Left cardiac atrium (tissue), 4 donors: ENCODE measurements at regions of chr1 and their contacts with region 1.

Region 1: DNA sequence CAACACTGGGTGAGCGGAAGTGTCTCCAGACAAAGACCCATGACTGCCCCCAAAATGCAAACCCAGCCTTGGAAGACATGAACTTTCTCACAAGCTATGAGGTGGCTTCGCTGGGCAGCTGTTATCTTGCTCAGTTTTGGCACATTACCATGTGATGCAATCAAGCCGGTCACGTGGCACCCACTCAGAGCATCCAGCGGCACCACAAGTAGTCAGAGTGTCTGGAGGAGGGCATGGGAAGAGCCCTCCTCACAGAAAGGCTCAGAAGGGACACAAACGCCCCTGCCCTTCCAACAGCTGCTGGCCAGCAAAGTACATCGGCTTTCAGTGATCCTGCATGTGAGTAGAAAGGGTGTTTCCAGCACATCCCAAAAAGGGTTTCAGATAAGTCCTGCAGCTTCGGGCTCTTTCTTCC is 145.5 kb upstream of the IRF2BP2 start:
- DNase-seq: peak; percentile 81
- ATAC-seq: peak; percentile 87 to 94

Region 2: DNA sequence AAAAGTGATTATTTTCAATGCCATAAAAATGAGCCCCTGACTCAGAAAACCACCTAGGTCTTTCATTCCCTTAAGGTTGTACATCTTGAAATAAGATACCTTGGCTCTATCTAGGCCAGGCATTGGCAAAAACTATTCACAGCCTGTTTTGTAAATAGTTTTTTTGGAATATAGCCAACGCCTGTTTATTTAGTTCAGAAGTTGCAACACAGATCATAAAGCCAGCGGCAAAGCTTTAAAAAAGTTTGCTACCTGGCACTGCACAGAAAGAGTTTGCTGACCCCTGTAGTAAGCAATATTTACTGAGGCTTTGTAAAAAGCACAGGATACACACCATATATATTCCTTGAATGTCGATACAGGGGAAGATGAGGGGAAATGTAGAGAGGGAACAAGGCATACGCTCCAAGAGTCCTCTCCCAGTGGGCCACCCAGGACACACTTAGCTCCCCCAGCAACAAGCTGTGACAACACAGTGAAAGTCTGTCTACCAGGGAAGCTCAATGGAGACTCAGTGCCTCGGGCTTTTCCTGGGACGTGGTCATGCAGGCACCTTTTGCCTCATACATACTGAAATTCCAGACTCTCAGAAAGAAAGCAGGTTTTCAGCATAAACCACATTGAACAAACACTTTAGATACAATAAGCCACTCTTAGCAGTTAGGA is 297.0 kb before region 1 on chr1:
- intact Hi-C with region 1: no loop called
- DNase-seq: no peak
- ATAC-seq: no peak

Region 3: GRCh38 chr1:234856845-234857245 is 101.4 kb after region 1 on chr1:
- intact Hi-C with region 1: loop called in 1 of 2 experiments (anchors 5 kb)
- DNase-seq: peak; percentile 70
- ATAC-seq: peak; percentile 76 to 85

Region 4: DNA sequence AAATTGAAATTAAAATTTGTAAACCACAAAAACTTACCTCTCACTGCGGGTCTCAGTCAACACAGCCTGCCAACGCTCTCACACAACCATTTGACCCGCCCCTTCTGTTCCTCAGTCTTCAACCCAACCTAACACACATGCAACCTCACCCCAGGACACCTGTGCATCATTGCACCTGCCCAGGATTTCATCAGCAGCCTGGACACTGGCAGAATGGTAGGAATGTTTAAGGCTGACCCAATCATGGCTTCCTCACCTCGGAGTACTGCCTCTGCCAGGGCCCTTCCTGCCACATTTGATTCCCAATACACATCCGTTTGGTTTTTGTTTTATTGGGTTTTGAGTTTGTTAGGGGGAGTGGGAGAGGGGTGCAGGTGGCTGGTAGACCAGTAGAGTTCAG is 332.4 kb after region 1 on chr1:
- intact Hi-C with region 1: loop called in 1 of 2 experiments (anchors 5 kb)
- DNase-seq: no peak
- ATAC-seq: no peak